Gastrocnemius medialis (tissue), 4 donors: ENCODE measurements at regions of chr22 and their contacts with region 1.

Region 1: DNA sequence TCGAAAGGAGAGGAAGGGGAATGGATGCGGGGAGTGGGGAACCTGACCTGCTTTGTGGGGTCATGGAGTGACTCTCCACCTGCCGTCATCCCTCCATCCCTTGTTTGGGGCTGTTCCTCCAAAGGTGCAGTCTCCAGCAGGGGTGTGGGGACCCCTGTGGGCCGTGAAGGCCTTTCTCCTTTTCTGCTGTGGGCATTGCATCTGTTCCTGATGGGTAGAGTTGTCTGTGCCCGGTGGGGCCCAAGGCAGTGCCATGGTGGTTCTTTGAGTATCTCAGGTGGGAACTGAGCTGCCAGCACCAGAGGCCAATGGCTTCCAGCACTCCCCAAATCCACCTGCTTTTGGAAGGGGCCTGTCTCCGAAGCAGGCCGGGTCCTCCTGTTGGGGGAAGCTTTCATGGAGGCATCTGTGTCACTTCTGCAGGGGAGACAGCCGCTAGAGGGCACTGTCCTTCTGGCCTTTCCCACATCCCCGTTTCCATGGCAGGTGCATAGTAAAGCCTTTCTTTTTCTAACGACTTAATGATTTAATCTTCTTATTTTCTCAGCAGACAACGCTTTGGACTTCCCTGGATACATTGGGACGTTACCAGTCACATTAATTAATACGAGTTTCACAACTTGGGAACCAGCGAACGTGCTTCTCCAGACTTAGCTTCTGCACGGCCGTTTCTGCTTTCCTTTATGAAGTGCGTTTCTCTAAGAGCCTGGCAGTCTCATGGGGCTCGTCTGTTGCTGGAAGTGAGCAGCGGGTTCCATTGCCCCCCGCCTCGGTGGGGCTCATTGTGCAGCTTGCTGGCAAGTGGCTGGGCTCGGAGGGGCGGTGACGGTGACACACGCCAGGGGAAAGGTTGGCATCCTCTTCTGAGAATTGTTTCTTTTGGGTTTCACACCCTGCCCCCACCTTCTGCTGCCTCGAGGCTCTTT is 57.1 kb downstream of the PARVB start:
- DNase-seq: peak; percentile 45 to 59
- ATAC-seq: no peak
- H3K4me3 ChIP-seq: no peak overlapping the region
- H3K27ac ChIP-seq: peak overlapping the region in 1 of 4 donors; percentile 39
- H3K4me1 ChIP-seq: peaks cover 41 to 49% of the 10 kb centered on the region in 2 donors
- H3K27me3 ChIP-seq: no peaks in the 10 kb centered on the region
- CTCF ChIP-seq: peak; percentile 46 to 87 (median 79)
- POLR2A ChIP-seq: no peak

Region 2: DNA sequence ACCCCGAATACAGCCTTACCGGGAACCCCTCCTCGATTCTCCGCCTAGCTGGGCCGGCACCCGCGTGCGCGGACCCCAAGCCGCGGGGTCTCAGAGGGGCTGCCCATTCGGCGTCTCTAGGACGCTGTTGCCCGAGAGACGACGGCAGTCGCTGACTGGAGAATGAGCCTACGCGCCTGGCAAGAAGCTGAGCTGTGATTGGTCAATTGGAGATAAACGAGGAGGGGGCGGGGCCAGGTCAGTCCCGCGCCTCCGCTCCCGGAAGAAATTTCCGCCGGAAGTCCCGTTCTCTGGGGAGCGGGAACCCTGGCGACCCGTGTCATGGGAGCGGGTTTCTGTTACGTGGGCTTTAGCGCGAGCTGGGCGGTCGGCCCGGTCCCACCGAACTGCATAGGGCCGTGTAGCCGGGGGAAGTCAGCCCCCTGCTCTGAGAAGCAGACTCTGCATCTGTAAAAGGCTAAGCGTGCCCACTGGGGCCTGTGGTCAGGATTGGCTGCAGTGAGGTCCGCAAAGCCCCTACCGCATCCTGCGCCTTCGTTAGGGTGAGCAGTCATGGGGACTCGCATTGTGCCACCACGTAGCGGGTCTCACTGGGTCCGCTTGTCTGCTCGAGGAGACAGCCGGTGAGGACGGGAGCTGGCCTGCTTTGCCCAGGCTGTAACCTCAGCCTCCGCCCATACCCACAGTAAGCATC is 268.9 kb before region 1 on chr22 and contains the start of gene EFCAB6:
- in situ Hi-C with region 1: loop called in 1 of 4 experiments (anchors 25 kb)
- intact Hi-C with region 1: no loop called
- DNase-seq: peak; percentile 89 to 91
- ATAC-seq: peak; percentile 98 to 99
- H3K4me3 ChIP-seq: peak within 1 kb of the TSS; percentile 76 to 94 (median 90)
- H3K27ac ChIP-seq: peak within 1 kb of the TSS; percentile 70 to 82 (median 80)
- H3K4me1 ChIP-seq: peaks cover 9 to 18% of the 10 kb centered on the region in 2 donors
- H3K27me3 ChIP-seq: no peaks in the 10 kb centered on the region
- CTCF ChIP-seq: no peak
- POLR2A ChIP-seq: peak; percentile 34 to 39
- total RNA-seq, gene EFCAB6: 0.07 to 4.4 (median 0.28) TPM

Region 3: GRCh38 chr22:43993027-43993760 is 88.0 kb before region 1 on chr22:
- in situ Hi-C with region 1: loop called (anchors 5 kb)
- intact Hi-C with region 1: loop called (anchors 1 kb)
- DNase-seq: peak; percentile 29 to 53
- ATAC-seq: peak; percentile 60 to 63
- H3K4me3 ChIP-seq: no peak overlapping the region
- H3K27ac ChIP-seq: peak overlapping the region; percentile 74 to 85 (median 82)
- H3K4me1 ChIP-seq: peaks cover 25 to 28% of the 10 kb centered on the region in 2 donors
- H3K27me3 ChIP-seq: no peaks in the 10 kb centered on the region
- CTCF ChIP-seq: peak; percentile 91 to 98 (median 96)
- POLR2A ChIP-seq: no peak

Region 4: DNA sequence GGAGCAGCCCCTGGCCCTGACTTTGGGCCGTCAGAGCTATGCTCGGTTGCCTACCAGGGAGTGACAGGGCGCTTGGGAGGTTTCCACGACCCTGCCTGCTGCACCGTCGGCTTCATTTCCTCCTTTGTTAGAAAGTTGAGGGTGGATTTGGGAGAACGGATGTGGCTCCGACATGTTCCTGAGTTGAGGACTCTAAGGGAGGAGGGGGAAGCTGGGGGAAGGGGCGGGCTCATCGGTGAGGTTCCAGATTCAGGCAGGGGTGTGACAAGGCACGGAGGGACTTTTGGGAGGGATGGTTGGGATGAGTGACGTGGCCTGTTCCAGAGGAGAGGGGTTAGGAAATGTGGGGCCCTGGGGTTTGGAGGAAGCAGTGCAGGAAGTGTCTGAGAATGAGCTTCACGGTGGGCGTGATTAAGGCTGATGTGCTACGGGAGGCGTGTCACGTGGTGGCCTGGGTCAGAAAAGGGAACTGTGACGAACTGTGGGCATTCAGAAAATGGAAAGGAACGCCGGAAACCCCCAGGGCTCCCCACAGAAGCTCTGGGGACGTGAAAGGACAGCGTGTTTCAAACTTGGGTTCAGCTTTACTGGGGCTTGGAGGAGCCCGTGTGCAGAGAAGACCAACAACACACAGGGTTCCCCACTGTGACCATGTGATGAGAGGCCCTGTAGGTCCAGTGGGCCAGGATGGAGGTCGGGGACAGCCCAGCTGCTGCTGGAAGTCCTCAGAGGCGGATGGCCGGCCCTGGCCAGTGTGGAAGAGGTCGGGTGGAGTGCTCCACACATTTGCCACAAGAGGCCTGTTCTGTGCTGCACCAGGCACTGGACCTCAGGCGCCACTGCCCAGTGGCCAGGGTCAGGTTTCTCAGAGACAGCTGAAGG is 54.3 kb before region 1 on chr22:
- in situ Hi-C with region 1: loop called in 1 of 4 experiments (anchors 10 kb)
- intact Hi-C with region 1: loop called (anchors 1 kb)
- DNase-seq: peak; percentile 74 to 84
- ATAC-seq: peak; percentile 37 to 42
- H3K4me3 ChIP-seq: peak overlapping the region; percentile 49 to 79 (median 66)
- H3K27ac ChIP-seq: peak overlapping the region; percentile 94 to 98 (median 97)
- H3K4me1 ChIP-seq: peaks cover 81 to 88% of the 10 kb centered on the region in 2 donors
- H3K27me3 ChIP-seq: no peaks in the 10 kb centered on the region
- CTCF ChIP-seq: no peak
- POLR2A ChIP-seq: peak; percentile 49 to 74

Region 5: DNA sequence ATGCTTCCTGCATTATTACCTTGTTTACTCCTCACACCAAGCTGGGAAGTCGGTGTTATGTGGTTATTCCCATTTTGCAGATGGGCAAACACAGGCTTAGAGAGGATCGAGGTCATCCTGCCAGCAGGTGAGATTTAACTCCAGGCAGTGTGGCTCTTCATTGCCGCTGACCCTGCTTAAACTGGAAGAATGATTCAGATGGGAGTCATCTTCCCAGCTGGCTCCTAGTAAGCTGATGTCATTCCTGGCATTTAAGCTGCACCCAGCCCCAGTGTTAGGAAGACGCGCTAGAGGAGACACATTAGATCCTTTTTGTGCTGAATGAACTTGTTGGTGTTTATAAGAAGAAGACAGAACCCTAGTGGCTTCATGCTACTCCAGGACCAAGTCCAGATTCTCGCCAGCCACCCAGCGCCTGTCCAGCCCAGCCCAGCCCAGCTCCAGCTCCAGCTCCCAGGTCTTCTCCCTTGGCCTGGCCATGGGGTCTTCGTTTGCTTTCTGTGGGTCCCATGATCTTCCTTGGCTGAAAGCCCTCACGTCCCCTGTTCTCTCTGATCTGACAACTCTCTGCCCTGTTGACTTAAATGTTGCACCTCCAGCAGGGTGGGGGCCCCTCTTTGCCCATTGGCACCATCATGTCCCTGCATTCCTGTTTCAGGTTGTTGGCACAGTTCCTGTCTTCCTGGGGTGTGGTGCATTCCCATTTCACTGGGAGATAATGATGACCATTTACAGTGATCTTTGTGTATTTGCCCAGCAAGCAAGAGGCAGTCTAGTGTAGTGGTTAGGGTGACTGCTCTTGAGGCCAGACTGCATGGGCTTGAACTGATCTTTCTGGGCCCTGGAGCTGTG is 43.5 kb before region 1 on chr22:
- in situ Hi-C with region 1: no loop called
- intact Hi-C with region 1: loop called (anchors 2 kb)
- DNase-seq: peak; percentile 85 to 92
- ATAC-seq: peak; percentile 95 to 96
- H3K4me3 ChIP-seq: peak overlapping the region in 2 of 4 donors; percentile 12 to 17
- H3K27ac ChIP-seq: peak overlapping the region; percentile 94 to 98 (median 97)
- H3K4me1 ChIP-seq: peaks cover 47 to 57% of the 10 kb centered on the region in 2 donors
- H3K27me3 ChIP-seq: no peaks in the 10 kb centered on the region
- CTCF ChIP-seq: no peak
- POLR2A ChIP-seq: peak; percentile 36 to 70

Region 6: GRCh38 chr22:44192098-44192810 is 111.1 kb after region 1 on chr22:
- in situ Hi-C with region 1: no loop called
- intact Hi-C with region 1: no loop called
- DNase-seq: no peak
- ATAC-seq: no peak
- H3K4me3 ChIP-seq: no peak overlapping the region
- H3K27ac ChIP-seq: no peak overlapping the region
- H3K4me1 ChIP-seq: no peaks in the 10 kb centered on the region
- H3K27me3 ChIP-seq: peaks cover 0 to 6% (median 5%) of the 10 kb centered on the region in 3 donors
- CTCF ChIP-seq: no peak
- POLR2A ChIP-seq: no peak

Region 7: DNA sequence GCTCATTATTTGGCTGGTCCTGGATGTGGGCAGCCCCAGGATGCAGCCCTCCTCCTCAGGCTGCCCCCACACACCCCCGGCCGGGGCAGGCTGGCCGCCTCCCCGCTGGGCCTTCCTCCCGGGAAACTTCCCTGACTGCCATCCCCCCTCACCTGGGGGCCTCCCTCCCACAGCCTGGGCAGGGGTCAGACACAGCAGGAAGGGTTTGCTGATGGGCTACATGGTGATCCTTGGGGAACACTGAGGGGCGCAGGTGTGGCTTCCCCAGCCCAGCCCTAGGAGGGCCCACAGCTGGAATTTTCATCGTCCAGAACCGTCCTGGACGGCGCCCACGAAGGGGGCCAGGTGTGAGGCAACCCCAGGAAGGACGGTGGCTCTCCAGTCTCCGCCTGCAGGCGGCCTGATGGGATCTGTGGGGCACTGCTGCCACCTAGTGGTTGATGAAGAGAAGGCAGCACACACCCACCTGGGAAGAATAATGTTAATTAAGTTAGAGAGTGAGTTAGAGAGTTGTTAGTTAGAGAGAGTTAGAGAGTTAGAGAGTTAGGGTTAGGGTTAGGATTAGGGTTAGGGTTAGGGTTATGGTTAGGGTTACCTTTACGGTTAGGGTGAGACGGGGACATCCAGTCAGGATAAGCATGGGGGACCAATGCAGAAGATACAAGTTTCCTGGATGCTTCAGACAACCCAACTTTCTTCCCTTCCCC is 544.9 kb after region 1 on chr22:
- in situ Hi-C with region 1: loop called in 1 of 4 experiments (anchors 10 kb)
- intact Hi-C with region 1: no loop called
- DNase-seq: peak; percentile 14 to 28
- ATAC-seq: peak; percentile 81 to 82
- H3K4me3 ChIP-seq: no peak overlapping the region
- H3K27ac ChIP-seq: no peak overlapping the region
- H3K4me1 ChIP-seq: no peaks in the 10 kb centered on the region
- H3K27me3 ChIP-seq: peaks cover 3 to 8% (median 8%) of the 10 kb centered on the region in 3 donors
- CTCF ChIP-seq: peak; percentile 95 to 99 (median 97)
- POLR2A ChIP-seq: no peak